ENCODE measurements at regions of chr7 and their contacts with region 1.

Region 1: DNA sequence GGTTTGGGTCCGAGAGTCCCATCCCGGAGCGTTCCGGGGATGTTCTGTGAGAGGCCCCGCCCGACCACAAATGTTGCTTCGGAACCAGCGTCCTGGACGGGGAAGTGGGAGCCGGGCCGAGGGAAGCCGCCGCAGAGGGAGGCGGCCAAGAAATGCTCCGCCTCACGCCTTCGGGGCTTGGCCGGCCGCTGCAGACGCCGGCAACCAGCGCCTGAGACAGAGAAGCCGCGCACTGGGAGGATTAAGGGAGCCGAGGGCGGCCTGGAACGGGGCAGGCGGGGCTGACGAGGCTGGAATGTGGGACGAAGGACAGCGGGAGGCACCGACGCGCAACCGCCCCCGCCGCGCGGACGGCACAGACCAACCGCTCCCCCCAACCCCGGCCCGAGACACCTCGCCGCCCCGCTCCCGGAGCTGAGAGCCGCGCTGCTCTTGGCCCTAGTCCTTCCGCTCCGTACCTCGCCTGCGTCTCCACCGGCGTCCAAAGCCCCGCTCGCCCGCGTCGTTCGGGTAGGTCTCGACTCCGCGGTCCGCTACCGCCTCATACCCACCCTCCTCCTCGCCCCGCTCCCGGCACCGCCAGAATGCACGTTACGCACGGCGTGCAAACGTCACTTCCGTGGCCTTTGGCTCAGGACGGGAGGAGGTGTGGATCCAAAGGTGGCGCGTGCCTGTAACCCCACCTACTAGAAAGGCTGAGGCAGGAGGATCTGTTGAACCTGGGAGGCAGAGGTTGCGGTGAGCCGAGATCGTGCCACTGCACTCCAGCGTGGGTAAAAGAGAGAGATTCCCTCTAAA is 36.7 kb upstream of the KCTD7 start:
- DNase-seq: peak; percentile 81 to 89
- H3K4me3 ChIP-seq: peak overlapping the region; percentile 97
- H3K27ac ChIP-seq: peak overlapping the region; percentile 43
- H3K4me1 ChIP-seq: peaks cover 17% of the 10 kb centered on the region
- H3K27me3 ChIP-seq: no peaks in the 10 kb centered on the region
- CTCF ChIP-seq: no peak

Region 2: GRCh38 chr7:66307591-66308215 is 284.3 kb before region 1 on chr7:
- CTCF ChIA-PET with region 1: no interaction called
- POLR2A ChIA-PET with region 1: no interaction called
- intact Hi-C with region 1: no loop called
- DNase-seq: peak in 1 of 2 experiments; percentile 36
- H3K4me3 ChIP-seq: no peak overlapping the region
- H3K27ac ChIP-seq: no peak overlapping the region
- H3K4me1 ChIP-seq: peaks cover 24% of the 10 kb centered on the region
- H3K27me3 ChIP-seq: no peaks in the 10 kb centered on the region
- CTCF ChIP-seq: no peak

Region 3: GRCh38 chr7:66654123-66654732 is 62.2 kb after region 1 on chr7:
- CTCF ChIA-PET with region 1: interaction called, 7 read pairs
- POLR2A ChIA-PET with region 1: no interaction called
- intact Hi-C with region 1: loop called (anchors 1 kb)
- DNase-seq: peak; percentile 96 to 99
- H3K4me3 ChIP-seq: peak overlapping the region; percentile 64
- H3K27ac ChIP-seq: peak overlapping the region; percentile 92
- H3K4me1 ChIP-seq: peaks cover 19% of the 10 kb centered on the region
- H3K27me3 ChIP-seq: no peaks in the 10 kb centered on the region
- CTCF ChIP-seq: peak; percentile 32; the same call in 1 of the 2 replicates

Region 4: DNA sequence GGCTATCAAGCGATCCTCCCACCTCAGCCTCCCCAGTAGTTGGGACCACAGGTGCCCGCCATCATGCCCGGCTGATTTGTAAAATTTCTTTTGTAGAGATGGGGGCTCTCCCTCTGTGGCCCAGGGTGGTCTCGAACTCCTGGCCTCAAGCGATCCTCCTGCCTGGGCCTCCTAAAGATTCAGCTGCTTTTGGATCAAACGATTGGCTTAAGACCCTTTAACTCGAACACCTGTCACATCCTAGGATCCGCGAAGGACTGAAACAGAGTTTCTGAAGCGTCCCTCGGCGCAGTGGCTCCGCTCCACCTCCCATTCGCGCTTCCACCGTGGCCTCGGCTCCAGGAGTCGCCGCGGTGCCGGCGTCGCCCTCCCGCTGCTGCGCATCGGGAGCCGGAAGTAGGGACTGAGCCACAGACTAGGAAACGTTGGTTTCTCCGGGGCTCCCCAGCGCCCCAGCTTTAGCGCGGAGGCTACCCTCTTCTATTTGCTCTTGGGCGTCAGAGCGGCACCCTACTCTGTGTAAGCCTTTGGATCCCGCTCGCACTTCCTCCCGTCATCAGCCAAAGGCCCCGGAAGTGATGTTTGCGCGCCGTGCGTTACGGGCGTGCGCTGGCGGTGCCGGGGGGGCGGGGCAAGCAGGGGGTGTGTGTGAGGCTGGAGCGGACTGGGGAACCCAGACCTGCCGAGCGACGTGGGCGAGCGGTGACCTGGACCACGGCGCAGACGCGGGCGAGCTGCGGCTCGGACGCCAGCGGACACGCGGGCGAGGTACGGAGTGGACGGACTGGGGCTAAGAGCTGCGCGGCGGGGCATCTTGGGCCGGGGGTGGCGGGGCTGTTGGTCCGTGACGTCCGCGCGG is 89.7 kb after region 1 on chr7:
- CTCF ChIA-PET with region 1: no interaction called
- POLR2A ChIA-PET with region 1: no interaction called
- intact Hi-C with region 1: loop called (anchors 1 kb)
- DNase-seq: peak; percentile 91 to 96
- H3K4me3 ChIP-seq: peak overlapping the region; percentile 89
- H3K27ac ChIP-seq: peak overlapping the region; percentile 77
- H3K4me1 ChIP-seq: peaks cover 11% of the 10 kb centered on the region
- H3K27me3 ChIP-seq: no peaks in the 10 kb centered on the region
- CTCF ChIP-seq: no peak